ENCODE measurements at regions of chr1 and their contacts with region 1.

Region 1: GRCh38 chr1:19341201-19342072 is 29.3 kb downstream of the SLC66A1 start:
- DNase-seq: no peak
- H3K4me3 ChIP-seq: no peak overlapping the region
- CTCF ChIP-seq: peak; percentile 78

Region 2: DNA sequence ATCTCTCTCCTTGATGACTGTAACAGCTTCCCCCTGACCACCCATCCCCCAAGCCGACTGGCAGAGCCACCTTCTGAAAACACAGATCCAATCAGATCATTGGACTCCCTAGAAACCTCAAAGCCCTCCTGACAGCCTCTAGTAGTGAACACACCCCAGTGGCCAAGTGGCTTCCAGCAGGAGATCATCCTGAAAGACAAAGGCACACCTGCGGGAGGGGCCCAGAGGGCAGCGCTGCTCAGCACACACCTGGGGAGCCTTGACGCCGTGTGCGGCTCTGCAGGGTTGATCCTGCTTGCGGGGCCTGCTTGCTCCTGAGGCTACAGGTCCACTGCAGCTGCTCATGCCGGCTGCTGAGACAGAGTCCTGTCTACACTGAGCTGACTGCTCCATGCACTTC is 12.2 kb after region 1 on chr1:
- CTCF ChIA-PET with region 1: interaction called, 51 read pairs
- POLR2A ChIA-PET with region 1: interaction called, 3 read pairs
- DNase-seq: no peak
- H3K4me3 ChIP-seq: no peak overlapping the region
- CTCF ChIP-seq: no peak

Region 3: GRCh38 chr1:19643602-19644394 is 302.4 kb after region 1 on chr1 and contains the start of gene NBL1:
- CTCF ChIA-PET with region 1: interaction called, 178 read pairs
- POLR2A ChIA-PET with region 1: no interaction called
- DNase-seq: no peak
- H3K4me3 ChIP-seq: peak within 1 kb of the TSS; percentile 70
- CTCF ChIP-seq: no peak

Measured in AG04449 (cell line).